ENCODE measurements at regions of chr20 and their contacts with region 1.

Region 1: GRCh38 chr20:41738604-41739206 is 120.5 kb upstream of the CHD6 start:
- DNase-seq: peak; percentile 23 to 62
- H3K4me3 ChIP-seq: no peak overlapping the region
- H3K27ac ChIP-seq: no peak overlapping the region
- H3K4me1 ChIP-seq: no peaks in the 10 kb centered on the region
- H3K27me3 ChIP-seq: no peaks in the 10 kb centered on the region
- CTCF ChIP-seq: peak in 2 of 3 donors; percentile 60 to 78
- POLR2A ChIP-seq: no peak

Region 2: GRCh38 chr20:41989935-41990635 is 251.4 kb after region 1 on chr20:
- intact Hi-C with region 1: loop called (anchors 10 kb)
- DNase-seq: no peak
- H3K4me3 ChIP-seq: no peak overlapping the region
- H3K27ac ChIP-seq: no peak overlapping the region
- H3K4me1 ChIP-seq: no peaks in the 10 kb centered on the region
- H3K27me3 ChIP-seq: no peaks in the 10 kb centered on the region
- CTCF ChIP-seq: no peak
- POLR2A ChIP-seq: no peak

Measured in breast epithelium (tissue), 4 donors.